ENCODE measurements at regions of chr11 and their contacts with region 1.

Region 1: GRCh38 chr11:12673924-12674570 is at the start of gene TEAD1:
- DNase-seq: peak; percentile 96
- ATAC-seq: peak; percentile 95 to 98
- total RNA-seq, gene TEAD1: 89.6 to 93.8 TPM

Region 2: DNA sequence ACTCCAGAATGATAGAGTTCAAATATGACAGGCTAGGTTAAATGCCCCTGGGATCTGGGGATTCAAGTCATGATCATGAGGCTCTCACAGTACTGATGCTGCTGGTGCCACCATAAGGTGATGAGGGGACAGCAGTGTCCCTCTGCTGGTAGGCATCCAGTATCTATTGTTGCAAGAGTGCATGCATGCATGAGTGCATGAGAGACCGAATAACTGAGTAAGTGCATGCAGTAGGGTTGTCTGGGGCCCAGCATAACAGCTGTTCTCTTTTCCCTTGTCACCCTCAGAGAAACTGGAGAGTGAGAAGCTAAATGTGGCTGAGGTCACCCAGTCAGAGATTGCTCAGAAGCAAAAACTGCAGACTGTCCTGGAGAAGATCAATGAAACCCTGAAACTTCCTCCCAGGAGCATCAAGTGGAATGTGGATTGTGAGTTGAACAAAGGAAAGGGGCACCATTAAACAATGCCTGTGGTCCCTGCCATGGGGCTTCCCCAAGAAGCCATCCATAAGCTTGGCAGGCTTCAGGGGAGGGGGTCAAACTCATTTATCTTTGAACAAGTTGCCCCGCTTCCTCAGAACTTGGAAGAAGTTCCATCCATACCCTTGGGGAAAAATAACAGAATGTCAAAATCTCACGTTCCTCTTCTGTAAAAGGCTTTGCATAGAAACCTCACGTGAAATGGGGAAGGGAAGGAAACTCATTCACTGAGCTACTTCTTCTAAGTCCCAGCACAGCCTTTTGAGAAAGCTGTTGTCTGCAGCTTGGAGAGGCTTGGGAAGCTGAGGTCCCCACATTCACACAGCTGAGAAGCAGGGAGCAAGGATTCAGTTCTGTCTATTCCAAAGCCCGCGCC is 177.6 kb before region 1 on chr11:
- intact Hi-C with region 1: no loop called
- DNase-seq: no peak
- ATAC-seq: peak in 1 of 2 donors; percentile 22

Region 3: GRCh38 chr11:12599408-12600143 is 74.5 kb before region 1 on chr11:
- intact Hi-C with region 1: loop called in 1 of 2 experiments (anchors 5 kb)
- DNase-seq: peak; percentile 46
- ATAC-seq: peak in 1 of 2 donors; percentile 66

Region 4: DNA sequence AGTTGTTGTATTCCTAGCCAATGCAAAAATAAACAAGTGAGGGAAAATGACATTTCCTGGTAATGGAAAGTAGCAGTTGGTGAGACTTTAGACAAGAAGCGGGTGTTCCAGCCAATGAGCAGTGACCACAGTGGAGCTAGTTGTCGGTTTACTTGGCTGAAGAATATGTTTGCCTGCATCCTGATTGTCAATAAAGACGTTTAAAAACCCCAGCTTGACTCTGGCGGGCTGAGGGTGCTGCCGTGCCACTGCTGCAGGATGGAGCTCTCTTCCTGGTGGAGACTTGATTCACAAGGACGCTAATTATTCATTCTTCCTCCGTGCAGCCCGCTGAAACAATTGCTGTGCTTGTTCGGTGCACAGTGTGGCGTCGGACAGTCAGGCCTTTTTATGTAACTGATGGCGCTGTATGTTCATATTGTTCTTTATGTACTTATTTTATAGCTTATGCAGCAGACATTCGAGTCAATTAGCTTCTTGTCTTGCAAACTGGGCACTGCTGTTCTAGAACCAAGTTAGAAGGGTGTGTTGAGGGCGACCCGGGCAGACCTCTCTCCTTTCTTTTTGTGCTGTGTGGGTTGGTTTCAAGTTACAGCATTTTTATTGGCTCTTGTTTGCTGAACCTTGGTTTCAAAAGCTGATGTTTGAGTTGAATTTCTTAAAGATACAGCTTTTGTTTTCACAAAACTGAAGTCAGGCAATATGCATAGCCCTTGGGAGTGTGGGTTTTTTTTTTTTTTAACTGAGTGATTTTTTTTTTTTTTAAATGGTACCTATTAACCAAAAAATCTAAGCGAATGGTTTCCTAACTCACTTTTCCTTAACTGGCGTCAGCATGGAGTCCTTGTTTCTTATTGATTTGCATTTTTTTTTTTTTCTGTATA is 154.1 kb after region 1 on chr11:
- intact Hi-C with region 1: loop called in 1 of 2 experiments (anchors 10 kb)
- DNase-seq: peak; percentile 39
- ATAC-seq: peak; percentile 89

Region 5: GRCh38 chr11:12888525-12889158 is 214.6 kb after region 1 on chr11:
- intact Hi-C with region 1: loop called (anchors 5 to 10 kb)
- DNase-seq: peak; percentile 92
- ATAC-seq: peak; percentile 90 to 91

Region 6: DNA sequence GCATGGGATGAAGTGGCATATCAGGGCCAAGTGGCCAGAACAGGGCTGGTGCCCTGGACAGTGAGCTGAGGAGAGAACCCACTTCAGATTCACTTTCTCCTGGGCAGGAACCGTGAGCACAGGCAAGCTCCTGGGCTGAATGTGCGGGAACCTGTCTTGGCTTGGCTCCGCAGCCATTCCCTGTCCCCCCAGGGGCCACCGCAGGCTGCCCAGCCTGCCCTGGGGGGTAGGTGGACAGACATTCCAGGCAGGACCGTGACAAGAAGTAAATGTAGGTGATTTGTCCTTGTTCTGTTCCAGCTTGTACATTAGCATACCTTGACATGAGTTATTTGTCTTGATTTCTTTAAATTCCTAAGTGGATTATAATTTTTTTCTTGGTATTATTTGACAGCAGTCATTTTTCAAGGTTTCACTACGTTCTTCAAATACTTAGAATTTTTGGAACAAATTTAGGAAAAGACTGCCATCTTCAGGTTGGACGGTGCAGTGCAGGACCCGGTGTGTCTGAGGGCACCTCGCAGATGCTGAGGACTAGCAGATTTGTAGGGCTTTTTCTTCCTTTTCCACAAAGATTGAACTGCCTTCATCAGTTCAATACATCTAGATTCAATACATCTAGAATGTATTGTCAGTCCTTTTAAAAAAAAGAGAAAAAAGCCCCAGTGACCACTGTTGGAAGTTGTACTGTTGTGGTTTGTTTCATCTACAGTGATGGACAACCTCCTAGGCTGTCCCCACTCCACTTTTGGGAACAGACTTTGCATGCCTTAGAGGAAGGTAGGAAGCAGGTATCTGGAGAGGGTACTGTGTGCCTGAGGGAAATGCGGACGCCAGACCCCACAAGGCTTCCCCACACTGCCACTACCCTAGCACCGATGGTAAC is 220.0 kb after region 1 on chr11:
- intact Hi-C with region 1: loop called (anchors 5 to 10 kb)
- DNase-seq: peak; percentile 55
- ATAC-seq: peak; percentile 17 to 54

Measured in left cardiac atrium (tissue), 4 donors.